ENCODE measurements at regions of chr5 and their contacts with region 1.

Region 1: DNA sequence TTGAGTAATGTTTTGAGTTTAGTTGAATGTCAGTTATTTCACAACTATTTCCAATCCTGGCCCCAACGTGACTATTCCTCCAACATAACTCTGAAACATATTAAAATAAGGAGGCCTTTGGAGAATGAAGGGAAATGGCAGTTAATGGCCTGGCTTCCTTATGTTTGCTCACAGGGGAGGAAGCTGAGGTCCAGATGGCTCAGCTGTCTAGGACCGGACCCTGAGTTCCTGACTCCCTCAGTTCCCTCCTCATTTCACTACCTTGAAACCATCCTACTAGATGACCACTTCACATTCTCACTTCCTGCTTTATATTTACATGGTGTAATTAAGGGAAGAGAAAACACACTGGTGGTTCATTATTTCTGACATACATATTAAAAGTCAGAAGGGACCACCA is 6.6 kb downstream of the OTULINL start:
- DNase-seq: no peak
- H3K4me3 ChIP-seq: no peak overlapping the region
- H3K27ac ChIP-seq: no peak overlapping the region
- H3K4me1 ChIP-seq: no peaks in the 10 kb centered on the region
- H3K27me3 ChIP-seq: no peaks in the 10 kb centered on the region
- CTCF ChIP-seq: no peak
- POLR2A ChIP-seq: no peak

Region 2: DNA sequence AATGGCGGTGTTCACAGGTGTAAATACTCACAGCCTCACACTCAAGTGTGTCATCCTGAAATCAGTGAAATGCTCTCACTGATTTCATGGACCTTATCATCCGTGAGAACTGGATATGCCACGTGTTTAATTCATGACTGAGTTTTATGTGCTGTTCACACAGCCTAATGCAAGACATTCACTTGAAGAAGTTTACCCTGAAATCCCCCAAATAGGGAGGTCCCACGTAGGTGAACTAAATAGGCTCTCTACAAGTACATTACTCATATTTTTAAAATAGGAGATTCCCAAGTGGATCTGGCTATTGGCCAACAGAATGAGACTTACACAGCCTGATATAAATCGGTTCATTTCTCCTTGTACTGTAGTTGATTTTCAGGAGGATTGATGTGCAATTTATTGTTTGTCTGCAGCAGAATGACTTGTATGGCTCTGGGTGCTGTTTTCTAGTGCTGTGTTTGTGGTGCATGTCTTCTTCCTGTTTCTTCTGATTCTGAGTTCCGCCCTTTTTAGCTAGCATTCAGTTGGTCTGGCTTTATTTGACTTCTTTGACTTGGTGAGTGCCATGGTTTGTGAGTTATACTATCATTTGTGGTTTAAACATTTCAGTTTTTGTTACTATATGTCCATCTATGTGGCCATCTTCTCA is 419.9 kb before region 1 on chr5:
- intact Hi-C with region 1: no loop called
- DNase-seq: no peak
- H3K4me3 ChIP-seq: no peak overlapping the region
- H3K27ac ChIP-seq: peak overlapping the region in 2 of 3 donors; percentile 45 to 60
- H3K4me1 ChIP-seq: peaks cover 15 to 39% of the 10 kb centered on the region in 2 donors
- H3K27me3 ChIP-seq: no peaks in the 10 kb centered on the region
- CTCF ChIP-seq: no peak
- POLR2A ChIP-seq: no peak

Region 3: GRCh38 chr5:14534773-14535172 is 53.4 kb before region 1 on chr5:
- intact Hi-C with region 1: loop called (anchors 5 kb)
- DNase-seq: peak; percentile 26 to 46
- H3K4me3 ChIP-seq: no peak overlapping the region
- H3K27ac ChIP-seq: peak overlapping the region in 1 of 3 donors; percentile 53
- H3K4me1 ChIP-seq: peaks cover 7 to 25% of the 10 kb centered on the region in 2 donors
- H3K27me3 ChIP-seq: no peaks in the 10 kb centered on the region
- CTCF ChIP-seq: no peak
- POLR2A ChIP-seq: no peak

Region 4: DNA sequence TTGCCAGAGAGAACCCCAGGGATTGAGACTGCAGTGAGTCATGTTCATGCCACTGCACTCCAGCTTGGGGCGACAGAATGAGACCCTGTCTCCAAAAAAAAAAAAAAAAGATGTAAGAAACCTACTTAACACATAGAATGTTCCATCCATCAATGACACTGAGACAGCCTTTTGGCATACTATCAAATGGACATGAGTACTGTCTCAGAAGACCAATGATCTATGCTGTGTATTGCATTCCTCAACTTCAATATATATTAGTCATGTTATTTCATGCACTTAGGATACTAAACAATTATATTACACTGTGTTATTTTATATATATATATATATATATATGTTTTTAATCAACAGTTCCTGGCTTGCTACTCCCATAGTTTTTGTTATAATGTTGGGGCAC is 340.5 kb after region 1 on chr5:
- intact Hi-C with region 1: no loop called
- DNase-seq: no peak
- H3K4me3 ChIP-seq: no peak overlapping the region
- H3K27ac ChIP-seq: no peak overlapping the region
- H3K4me1 ChIP-seq: no peaks in the 10 kb centered on the region
- H3K27me3 ChIP-seq: no peaks in the 10 kb centered on the region
- CTCF ChIP-seq: no peak
- POLR2A ChIP-seq: no peak